AG04449 (cell line): ENCODE measurements at regions of chr17 and their contacts with region 1.

Region 1: GRCh38 chr17:59440784-59441441 is 109.5 kb downstream of the YPEL2 start:
- DNase-seq: peak; percentile 63
- H3K4me3 ChIP-seq: no peak overlapping the region
- CTCF ChIP-seq: peak; percentile 85

Region 2: DNA sequence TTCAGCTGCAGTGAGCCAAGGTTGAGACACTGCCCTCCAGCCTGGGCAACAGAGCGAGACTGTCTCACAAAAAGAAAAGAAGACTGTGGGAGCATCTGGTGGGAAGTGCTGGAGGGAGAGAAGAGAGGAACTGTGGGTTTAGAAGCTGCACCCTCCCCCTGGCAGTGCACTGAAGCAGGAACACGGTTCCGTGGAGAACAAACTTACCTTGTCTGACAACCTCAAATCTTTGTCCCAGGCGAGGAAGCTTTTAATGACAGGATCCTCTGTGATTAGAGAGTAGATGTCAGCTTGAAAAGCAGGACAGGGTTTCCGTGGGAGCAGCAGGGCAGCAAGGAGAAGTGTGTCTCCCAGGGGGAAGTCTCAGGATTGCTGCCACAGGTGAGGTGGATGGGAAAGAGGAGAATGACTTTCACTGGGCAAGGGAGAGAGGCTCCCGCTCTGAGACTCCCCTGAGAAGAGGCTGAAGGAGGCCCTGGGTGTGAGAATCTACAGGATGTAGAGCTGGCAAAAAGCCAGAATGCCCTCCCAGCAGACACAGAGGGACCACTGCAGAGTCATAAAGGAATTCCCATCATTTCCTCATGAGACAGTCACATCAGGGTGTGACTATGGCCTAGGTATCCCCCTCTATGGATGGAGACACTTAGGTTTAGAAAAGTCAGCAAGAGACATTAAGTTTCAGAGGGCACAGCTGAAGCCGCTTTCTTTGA is 262.5 kb before region 1 on chr17:
- CTCF ChIA-PET with region 1: no interaction called
- POLR2A ChIA-PET with region 1: no interaction called
- DNase-seq: no peak
- H3K4me3 ChIP-seq: no peak overlapping the region
- CTCF ChIP-seq: no peak

Region 3: DNA sequence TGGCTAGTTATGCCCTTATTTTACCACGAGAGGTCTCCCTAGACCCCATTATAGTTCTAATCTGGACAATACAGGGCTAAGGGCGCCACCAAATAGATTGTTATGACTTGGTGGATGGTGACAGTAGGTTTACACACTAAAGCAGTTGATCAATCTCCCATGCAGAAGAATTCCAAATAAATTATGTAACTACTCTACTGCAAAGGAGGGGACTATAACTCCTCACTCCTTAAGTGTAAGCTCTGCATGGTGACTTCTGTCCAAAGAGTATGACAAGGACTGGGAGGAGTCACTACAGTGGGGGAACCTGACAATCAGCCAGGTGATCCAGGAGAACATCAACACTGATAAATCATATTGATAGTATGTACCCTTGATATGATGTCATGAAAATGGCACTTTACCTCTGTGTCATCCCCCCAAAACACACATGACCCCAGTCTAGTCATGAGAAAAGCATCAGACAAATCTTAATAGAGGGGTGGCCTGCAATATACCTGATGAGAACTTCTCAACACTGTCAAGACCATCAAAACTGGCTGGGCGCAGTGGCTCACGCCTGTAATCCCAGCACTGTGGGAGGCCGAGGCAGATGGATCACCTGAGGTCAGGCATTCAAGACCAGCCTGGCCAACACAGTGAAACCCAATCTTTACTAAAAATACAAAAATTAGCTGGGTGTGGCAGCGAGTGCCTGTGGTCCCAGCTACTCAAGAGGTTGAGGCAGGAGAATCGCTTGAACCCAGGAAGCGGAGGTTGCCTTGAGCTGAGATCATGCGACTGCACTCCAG is 129.6 kb before region 1 on chr17:
- CTCF ChIA-PET with region 1: interaction called, 403 read pairs
- POLR2A ChIA-PET with region 1: no interaction called
- DNase-seq: peak; percentile 5
- H3K4me3 ChIP-seq: no peak overlapping the region
- CTCF ChIP-seq: no peak

Region 4: DNA sequence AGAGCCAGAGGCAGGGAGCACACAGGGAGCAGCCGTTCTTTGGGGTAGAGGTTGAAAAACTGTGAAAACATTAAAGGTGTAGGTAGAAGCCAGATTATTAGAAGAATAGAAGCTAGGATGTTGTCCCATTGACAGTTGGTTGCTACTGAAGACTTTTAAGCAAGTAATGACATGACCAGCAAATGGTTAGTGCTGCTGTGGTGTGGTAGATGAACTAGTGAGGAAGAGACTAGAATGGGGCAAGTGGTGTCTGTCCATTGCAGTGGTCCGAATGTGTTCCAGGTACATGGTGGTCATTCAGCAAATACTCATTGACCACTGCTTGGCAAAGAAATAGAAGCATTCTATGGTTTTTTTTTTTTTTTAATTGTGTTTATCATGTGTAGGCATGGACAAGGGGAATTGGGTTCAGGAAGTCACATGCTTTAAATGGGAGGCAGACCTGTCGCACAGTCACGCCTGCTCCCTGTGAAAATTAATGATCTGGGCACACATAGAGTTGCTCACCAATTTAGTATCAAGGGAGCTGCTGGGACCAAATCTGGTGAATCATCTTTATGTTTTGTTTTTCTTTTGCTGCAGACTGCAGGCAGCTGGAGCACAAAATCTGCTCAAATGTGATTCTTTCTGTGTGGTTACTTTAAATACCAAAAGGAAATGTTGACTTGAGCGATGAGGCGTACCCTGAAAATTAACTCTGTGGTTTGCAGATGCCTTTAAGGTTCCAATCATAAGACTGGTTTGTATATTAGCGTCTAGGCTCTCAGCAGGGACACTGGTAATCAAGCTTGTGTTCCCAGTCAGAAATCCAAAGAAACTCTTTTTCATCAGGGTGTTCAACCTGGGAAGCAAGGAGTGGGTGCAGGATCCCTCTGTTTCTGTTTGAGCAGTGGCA is 78.8 kb before region 1 on chr17:
- CTCF ChIA-PET with region 1: interaction called, 11 read pairs
- POLR2A ChIA-PET with region 1: no interaction called
- DNase-seq: peak; percentile 91
- H3K4me3 ChIP-seq: no peak overlapping the region; the same call in 1 of the 2 replicates
- CTCF ChIP-seq: no peak

Region 5: GRCh38 chr17:59409336-59410048 is 31.4 kb before region 1 on chr17:
- CTCF ChIA-PET with region 1: no interaction called
- POLR2A ChIA-PET with region 1: no interaction called
- DNase-seq: no peak
- H3K4me3 ChIP-seq: no peak overlapping the region
- CTCF ChIP-seq: no peak

Region 6: DNA sequence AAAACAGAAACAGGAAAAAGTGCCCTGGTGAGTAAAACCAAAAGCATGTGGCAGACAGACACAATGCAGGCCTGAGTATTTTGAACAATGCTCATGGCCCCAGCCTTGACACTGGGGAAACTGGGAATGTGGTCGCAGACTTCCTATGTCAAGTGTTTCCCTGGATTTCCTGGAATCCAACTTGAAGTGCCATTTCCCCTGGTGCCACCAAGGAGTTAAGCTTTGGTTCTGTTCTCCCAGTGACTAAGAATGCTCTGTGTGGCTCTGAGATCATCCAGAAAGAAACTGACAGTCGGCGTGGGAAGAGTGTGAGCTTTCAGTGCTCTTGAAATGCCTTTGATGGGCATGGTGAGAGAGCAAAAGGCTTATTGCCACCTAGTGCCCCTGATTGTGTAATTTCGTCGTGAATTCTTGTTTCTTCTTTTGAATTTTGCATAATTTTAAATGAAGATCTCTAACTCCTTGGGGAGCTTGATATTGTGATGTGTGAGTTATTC is 13.4 kb before region 1 on chr17:
- CTCF ChIA-PET with region 1: interaction called, 149 read pairs
- POLR2A ChIA-PET with region 1: no interaction called
- DNase-seq: no peak
- H3K4me3 ChIP-seq: no peak overlapping the region
- CTCF ChIP-seq: no peak

Region 7: DNA sequence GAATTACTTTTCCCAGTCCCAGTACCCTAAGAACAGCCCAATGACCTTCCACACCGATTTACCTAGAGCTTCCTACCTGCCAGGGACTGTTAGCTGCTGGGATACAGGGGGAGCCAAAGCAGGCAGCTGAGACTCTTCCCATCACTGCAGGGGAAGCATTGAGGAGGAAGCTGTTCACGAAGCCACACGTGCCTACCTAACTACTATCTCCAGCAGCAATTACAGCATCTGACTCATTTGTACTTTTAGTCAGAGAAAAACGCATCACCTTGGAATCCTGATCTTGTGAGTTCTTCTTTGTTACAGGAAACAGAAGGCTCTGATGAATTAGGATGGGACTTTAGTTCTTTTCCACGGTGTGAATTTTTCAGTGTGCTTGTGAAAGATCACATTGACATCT is 10.8 kb after region 1 on chr17:
- CTCF ChIA-PET with region 1: interaction called, 32 read pairs
- POLR2A ChIA-PET with region 1: no interaction called
- DNase-seq: no peak
- H3K4me3 ChIP-seq: no peak overlapping the region
- CTCF ChIP-seq: no peak

Region 8: GRCh38 chr17:59456933-59457573 is 16.1 kb after region 1 on chr17:
- CTCF ChIA-PET with region 1: interaction called, 32 read pairs
- POLR2A ChIA-PET with region 1: no interaction called
- DNase-seq: no peak
- H3K4me3 ChIP-seq: no peak overlapping the region
- CTCF ChIP-seq: no peak

Region 9: DNA sequence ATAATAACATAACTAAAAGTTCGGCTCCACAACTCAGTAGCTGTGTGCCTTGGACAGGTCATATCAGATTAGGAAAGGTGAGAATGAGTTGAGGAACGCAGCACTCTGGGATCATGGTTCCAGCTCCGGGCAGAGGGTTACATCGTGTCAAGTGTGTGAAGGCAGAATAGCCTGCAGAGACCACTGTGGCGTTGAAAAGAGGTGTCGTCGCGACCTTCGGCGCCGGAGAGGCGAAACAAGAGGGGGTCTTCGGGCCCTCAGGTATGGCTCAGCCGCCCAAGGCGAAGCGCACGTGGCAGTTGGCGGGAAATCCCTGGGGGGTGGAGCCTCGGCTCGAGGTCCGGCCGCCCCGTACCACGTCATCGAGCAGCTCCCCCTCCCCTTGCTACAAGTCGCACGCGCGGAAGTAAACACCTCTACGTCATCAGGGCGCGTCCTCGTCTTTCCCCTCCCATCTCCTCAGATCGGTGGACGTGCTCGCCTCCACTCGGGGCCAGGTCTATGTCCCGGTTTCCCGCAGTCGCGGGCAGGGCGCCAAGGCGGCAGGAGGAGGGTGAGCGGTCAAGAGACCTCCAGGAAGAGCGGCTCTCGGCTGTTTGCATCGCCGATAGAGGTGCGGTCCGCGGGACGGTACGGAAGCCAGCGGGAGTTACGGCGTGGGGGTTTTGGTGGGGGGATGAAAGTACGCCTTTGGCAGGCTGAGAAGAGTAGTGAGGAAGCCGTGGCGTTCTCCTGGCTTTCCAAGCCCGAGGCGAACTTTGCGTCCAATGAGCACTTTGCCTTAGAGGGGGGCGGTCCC is 124.5 kb after region 1 on chr17 and contains the start of gene DHX40:
- CTCF ChIA-PET with region 1: interaction called, 14 read pairs
- POLR2A ChIA-PET with region 1: no interaction called
- DNase-seq: peak; percentile 74
- H3K4me3 ChIP-seq: peak within 1 kb of the TSS; percentile 100
- CTCF ChIP-seq: no peak

Region 10: GRCh38 chr17:60545465-60546454 is 1104.8 kb after region 1 on chr17:
- CTCF ChIA-PET with region 1: no interaction called
- POLR2A ChIA-PET with region 1: no interaction called
- DNase-seq: no peak
- H3K4me3 ChIP-seq: no peak overlapping the region
- CTCF ChIP-seq: no peak